ENCODE measurements at regions of chr11 and their contacts with region 1.

Region 1: DNA sequence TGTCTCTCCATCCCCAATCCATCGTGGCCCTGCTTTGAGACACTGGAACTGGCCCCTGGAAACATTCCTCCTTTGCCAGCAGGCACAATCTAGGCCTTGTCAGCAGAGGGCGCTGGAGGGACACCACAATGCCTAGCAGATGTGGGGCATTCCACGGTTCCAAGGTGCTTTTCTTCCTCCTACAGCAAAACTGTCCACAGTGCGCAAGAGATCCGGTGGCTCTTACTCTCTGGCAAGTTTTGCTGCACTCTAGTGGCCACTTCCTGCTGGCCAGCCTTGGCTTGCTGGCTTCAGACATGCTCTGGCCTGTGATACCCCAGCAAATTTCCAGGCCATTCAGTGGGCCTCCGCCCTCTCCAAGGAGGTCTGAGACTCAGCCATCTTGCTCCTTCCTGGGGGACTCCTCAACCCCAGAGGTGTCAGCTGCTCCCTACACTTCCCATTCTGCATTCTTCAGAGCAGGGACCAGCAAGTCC is 17.1 kb upstream of the RBM4B start:
- DNase-seq: peak; percentile 92
- H3K4me3 ChIP-seq: no peak overlapping the region
- H3K27ac ChIP-seq: no peak overlapping the region
- H3K4me1 ChIP-seq: no peaks in the 10 kb centered on the region
- H3K27me3 ChIP-seq: no peaks in the 10 kb centered on the region
- CTCF ChIP-seq: peak; percentile 95 to 99
- POLR2A ChIP-seq: no peak

Region 2: GRCh38 chr11:65743928-65744698 is 950.7 kb before region 1 on chr11:
- CTCF ChIA-PET with region 1: no interaction called
- POLR2A ChIA-PET with region 1: no interaction called
- dilution Hi-C with region 1: no loop called
- intact Hi-C with region 1: no loop called
- DNase-seq: peak; percentile 28
- H3K4me3 ChIP-seq: no peak overlapping the region
- H3K27ac ChIP-seq: no peak overlapping the region
- H3K4me1 ChIP-seq: no peaks in the 10 kb centered on the region
- H3K27me3 ChIP-seq: peaks cover 8 to 18% of the 10 kb centered on the region in 2 experiments
- CTCF ChIP-seq: peak in 1 of 2 donors; percentile 15
- POLR2A ChIP-seq: no peak

Region 3: GRCh38 chr11:66744485-66745340 is 49.9 kb after region 1 on chr11:
- CTCF ChIA-PET with region 1: interaction called, 3 read pairs
- POLR2A ChIA-PET with region 1: no interaction called
- dilution Hi-C with region 1: no loop called
- intact Hi-C with region 1: loop called (anchors 5 kb)
- DNase-seq: peak; percentile 84
- H3K4me3 ChIP-seq: peak overlapping the region; percentile 60 to 95 (median 78)
- H3K27ac ChIP-seq: peak overlapping the region; percentile 33
- H3K4me1 ChIP-seq: peaks cover 30% of the 10 kb centered on the region
- H3K27me3 ChIP-seq: no peaks in the 10 kb centered on the region
- CTCF ChIP-seq: no peak
- POLR2A ChIP-seq: peak; percentile 93

Region 4: GRCh38 chr11:66835768-66836405 is 141.1 kb after region 1 on chr11:
- CTCF ChIA-PET with region 1: interaction called, 30 read pairs
- POLR2A ChIA-PET with region 1: no interaction called
- dilution Hi-C with region 1: no loop called
- intact Hi-C with region 1: loop called (anchors 1 kb)
- DNase-seq: no peak
- H3K4me3 ChIP-seq: no peak overlapping the region
- H3K27ac ChIP-seq: no peak overlapping the region
- H3K4me1 ChIP-seq: peaks cover 4% of the 10 kb centered on the region
- H3K27me3 ChIP-seq: no peaks in the 10 kb centered on the region
- CTCF ChIP-seq: no peak
- POLR2A ChIP-seq: no peak

Region 5: DNA sequence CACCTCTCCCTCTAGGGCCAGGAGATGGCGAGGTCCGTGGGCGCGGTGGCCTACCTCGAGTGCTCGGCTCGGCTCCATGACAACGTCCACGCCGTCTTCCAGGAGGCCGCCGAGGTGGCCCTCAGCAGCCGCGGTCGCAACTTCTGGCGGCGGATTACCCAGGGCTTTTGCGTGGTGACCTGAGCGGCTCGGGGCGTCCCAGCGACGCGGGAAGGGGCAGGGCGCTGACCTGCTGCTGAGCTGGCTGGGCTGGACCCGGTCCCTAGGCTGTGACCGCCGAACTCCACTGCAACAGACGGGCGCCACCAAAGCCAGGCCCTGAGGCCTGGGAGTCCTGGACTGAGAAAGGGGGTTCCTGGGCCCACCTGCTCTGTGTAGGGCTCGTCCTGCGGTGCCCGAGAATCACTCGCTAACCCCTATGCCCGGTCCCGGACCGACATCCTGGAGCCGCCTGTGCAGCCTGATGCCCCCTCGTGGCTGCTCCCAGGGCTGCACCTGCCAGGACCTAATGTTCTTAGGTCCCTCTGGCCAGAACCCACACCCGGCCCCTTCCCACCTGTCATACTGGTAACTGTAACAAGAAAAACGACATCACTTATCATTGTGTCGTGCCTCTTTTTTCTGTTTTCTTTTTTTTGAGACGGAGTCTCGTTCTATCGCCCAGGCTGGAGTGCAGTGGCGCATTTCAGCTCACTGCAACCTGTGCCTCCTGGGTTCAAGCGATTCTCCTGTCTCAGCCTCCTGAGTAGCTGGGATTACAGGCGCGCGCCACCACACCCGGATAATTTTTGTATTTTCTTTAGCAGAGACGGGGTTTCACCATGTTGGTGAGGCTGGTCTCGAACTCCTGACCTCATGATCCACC is 376.9 kb after region 1 on chr11:
- CTCF ChIA-PET with region 1: no interaction called
- POLR2A ChIA-PET with region 1: no interaction called
- dilution Hi-C with region 1: no loop called
- intact Hi-C with region 1: loop called (anchors 1 kb)
- DNase-seq: peak; percentile 69
- H3K4me3 ChIP-seq: peak overlapping the region in 1 of 3 experiments; percentile 33
- H3K27ac ChIP-seq: no peak overlapping the region
- H3K4me1 ChIP-seq: peaks cover 3% of the 10 kb centered on the region
- H3K27me3 ChIP-seq: no peaks in the 10 kb centered on the region
- CTCF ChIP-seq: peak; percentile 91 to 95
- POLR2A ChIP-seq: no peak